ENCODE measurements at regions of chr5 and their contacts with region 1.

Region 1: DNA sequence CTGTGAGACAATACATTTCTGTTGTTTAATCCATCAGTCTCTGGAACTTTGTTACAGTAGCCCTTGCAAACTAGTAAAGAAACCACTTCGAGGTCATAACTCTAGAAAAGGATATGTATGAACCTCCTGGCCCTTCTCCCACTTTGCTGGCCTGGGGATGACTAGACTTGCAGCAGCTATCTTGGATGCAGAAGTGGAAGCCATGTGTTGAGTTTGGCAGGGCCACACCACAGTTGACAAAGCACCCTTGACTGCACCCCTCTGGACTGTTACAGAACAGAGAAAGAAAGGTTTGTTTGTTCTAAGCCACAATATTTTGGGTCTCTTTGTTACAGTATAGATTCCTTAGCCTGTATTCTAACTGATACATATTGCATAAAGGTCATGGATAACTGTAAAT is 183.2 kb upstream of the TAS2R1 start:
- DNase-seq: no peak
- ATAC-seq: no peak

Region 2: DNA sequence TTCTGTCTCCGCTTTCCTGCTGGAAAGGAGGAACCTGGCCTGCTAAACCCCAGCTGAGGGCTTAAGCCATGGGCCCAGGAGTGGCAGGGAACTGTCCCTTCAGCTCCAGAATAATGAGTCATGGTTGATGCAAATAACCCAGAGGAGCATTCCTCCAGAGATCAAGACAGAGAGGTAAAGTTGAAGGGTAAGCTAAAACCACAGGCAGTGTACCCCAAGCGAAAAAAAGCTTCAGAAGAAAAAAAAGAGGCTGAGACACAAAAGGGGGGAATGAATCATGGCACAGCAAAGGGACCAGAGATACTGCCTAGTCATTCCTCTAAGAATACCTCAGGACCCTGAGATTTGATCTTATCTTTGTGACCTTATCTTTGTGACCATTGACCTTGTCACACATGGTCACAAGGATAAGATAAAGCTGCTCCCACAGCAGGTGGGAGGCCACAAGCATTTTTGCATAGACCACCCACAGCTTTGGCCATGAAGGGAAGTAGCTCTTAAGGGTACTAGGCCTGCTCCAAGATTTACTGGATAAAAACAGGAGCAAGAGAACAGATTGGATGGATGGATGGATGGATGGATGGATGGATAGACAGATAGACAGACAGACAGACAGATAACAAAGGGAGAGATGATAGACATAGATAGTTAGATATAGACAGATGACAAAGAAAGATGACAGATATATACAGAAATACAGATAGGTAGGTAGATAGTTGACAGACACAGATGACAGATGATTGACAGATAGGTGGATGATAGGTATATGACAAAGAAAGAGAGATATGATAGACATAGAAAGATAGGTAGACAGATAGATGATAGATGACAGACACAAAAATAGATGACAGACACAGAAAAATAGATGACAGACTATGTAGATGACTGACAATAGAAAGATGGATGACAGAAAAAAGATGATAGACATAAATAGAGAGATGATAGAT is 16.6 kb after region 1 on chr5:
- intact Hi-C with region 1: loop called (anchors 2 kb)
- DNase-seq: no peak
- ATAC-seq: no peak

Measured in Right ventricle myocardium inferior (tissue), 1 donor.